ENCODE measurements at regions of chr15 and their contacts with region 1.

Region 1: DNA sequence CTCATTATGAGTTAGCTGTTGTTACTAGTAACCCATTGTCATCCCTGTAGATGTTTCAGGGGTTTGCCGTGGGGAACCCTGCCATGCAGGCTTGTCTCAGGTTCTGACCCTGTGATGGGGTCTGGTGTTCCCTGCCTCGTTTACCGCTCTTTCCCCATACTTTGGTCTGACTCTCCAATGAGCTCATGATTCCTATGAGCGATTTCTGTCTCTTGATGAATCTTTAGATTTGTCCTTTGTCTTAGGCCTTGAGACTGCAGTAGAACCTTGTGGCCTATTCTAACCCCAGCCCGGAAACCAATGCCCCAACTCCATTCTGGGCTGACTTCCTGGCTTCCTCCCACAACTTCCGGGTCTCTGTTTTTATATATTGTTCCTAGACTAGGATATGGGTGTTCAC is 11.3 kb upstream of the IQGAP1 start:
- DNase-seq: no peak
- H3K4me3 ChIP-seq: no peak overlapping the region
- H3K27ac ChIP-seq: no peak overlapping the region
- H3K4me1 ChIP-seq: no peaks in the 10 kb centered on the region
- H3K27me3 ChIP-seq: no peaks in the 10 kb centered on the region
- CTCF ChIP-seq: no peak

Region 2: GRCh38 chr15:89714775-89715174 is 662.0 kb before region 1 on chr15:
- CTCF ChIA-PET with region 1: no interaction called
- dilution Hi-C with region 1: no loop called
- in situ Hi-C with region 1: no loop called
- intact Hi-C with region 1: no loop called
- DNase-seq: no peak
- H3K4me3 ChIP-seq: no peak overlapping the region
- H3K27ac ChIP-seq: no peak overlapping the region
- H3K4me1 ChIP-seq: no peaks in the 10 kb centered on the region
- H3K27me3 ChIP-seq: no peaks in the 10 kb centered on the region
- CTCF ChIP-seq: no peak

Region 3: GRCh38 chr15:90436952-90437351 is 60.2 kb after region 1 on chr15:
- CTCF ChIA-PET with region 1: no interaction called
- dilution Hi-C with region 1: loop called (anchors 5 kb)
- in situ Hi-C with region 1: no loop called
- intact Hi-C with region 1: no loop called
- DNase-seq: no peak
- H3K4me3 ChIP-seq: no peak overlapping the region
- H3K27ac ChIP-seq: no peak overlapping the region
- H3K4me1 ChIP-seq: peaks cover 11% of the 10 kb centered on the region
- H3K27me3 ChIP-seq: no peaks in the 10 kb centered on the region
- CTCF ChIP-seq: no peak